Heart right ventricle (tissue), 16 donors: ENCODE measurements at regions of chrX and their contacts with region 1.

Region 1: DNA sequence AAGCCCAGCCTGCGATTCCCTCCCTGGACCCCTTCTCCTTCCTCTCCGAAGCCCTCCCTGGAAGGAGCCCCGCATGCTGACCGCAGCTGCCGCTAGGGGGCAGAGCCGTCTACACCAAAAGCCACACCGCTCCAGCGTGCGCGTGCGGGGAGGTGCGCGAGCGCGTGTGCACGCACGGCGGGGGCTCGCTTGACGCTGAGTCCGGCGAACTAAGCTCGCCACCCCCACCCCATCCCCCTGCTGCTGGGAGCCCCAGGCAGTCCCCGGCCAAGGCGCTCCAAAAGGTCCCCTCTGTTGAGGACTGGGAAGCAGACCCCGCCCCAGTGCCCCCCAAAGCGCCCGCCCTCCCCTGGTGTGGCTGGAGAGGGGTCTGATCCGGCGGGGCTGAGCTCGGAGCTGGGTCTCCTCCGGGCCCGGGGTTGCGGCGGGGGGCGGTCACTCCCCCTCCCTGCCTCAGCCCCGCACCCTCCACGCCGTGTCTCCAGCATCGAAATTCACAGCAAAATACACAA is 11.0 kb upstream of the CCNQ start:
- DNase-seq: peak; percentile 64 to 77
- ATAC-seq: peak; percentile 88 to 97 (median 94)
- H3K4me3 ChIP-seq: peak overlapping the region; percentile 15 to 52 (median 41)
- H3K27ac ChIP-seq: no peak overlapping the region
- H3K4me1 ChIP-seq: peaks cover 0 to 14% (median 11%) of the 10 kb centered on the region in 9 donors
- H3K27me3 ChIP-seq: peaks cover 0 to 82% (median 0%) of the 10 kb centered on the region in 7 donors
- CTCF ChIP-seq: peak; percentile 45 to 83 (median 76)

Region 2: DNA sequence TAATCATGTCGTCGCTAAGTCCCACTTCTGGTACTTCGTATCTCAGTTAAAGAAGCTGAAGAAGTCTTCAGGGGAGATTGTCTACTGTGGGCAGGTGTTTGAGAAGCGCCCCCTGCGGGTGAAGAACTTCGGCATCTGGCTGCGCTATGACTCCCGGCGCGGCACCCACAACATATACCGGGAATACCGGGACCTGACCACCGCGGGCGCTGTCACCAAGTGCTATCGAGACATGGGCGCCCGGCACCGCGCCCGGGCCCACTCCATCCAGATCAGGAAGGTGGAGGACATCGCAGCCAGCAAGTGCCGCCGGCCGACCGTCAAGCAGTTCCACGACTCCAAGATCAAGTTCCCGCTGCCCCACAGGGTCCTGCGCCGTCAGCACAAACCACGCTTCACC is 52.3 kb after region 1 on chrX:
- intact Hi-C with region 1: loop called in 7 of 10 experiments (anchors 5 to 10 kb)
- DNase-seq: peak; percentile 16 to 37
- ATAC-seq: peak in 1 of 8 donors; percentile 37
- H3K4me3 ChIP-seq: peak overlapping the region in 1 of 10 donors; percentile 6
- H3K27ac ChIP-seq: no peak overlapping the region
- H3K4me1 ChIP-seq: no peaks in the 10 kb centered on the region
- H3K27me3 ChIP-seq: peaks cover 0 to 73% (median 13%) of the 10 kb centered on the region in 7 donors
- CTCF ChIP-seq: peak in 8 of 9 donors; percentile 10 to 55 (median 46)

Region 3: GRCh38 chrX:154074199-154074598 is 464.2 kb after region 1 on chrX:
- intact Hi-C with region 1: no loop called
- DNase-seq: no peak
- ATAC-seq: no peak
- H3K4me3 ChIP-seq: no peak overlapping the region
- H3K27ac ChIP-seq: peak overlapping the region in 1 of 10 donors; percentile 21
- H3K4me1 ChIP-seq: peaks cover 0 to 47% (median 26%) of the 10 kb centered on the region in 9 donors
- H3K27me3 ChIP-seq: peaks cover 0 to 53% (median 0%) of the 10 kb centered on the region in 7 donors
- CTCF ChIP-seq: no peak